OCI-LY7 (cell line): ENCODE measurements at regions of chr17 and their contacts with region 1.

Region 1: GRCh38 chr17:36601303-36602029 is at the start of gene MRM1:
- DNase-seq: peak; percentile 95
- H3K4me3 ChIP-seq: peak within 1 kb of the TSS; percentile 90
- H3K27ac ChIP-seq: peak within 1 kb of the TSS; percentile 67
- H3K4me1 ChIP-seq: peaks cover 31% of the 10 kb centered on the region
- CTCF ChIP-seq: peak; percentile 60
- total RNA-seq, gene MRM1: 20.9 and 22.5 TPM in 2 replicates

Region 2: GRCh38 chr17:36463916-36464315 is 137.6 kb before region 1 on chr17:
- CTCF ChIA-PET with region 1: no interaction called
- POLR2A ChIA-PET with region 1: no interaction called
- intact Hi-C with region 1: no loop called
- DNase-seq: no peak
- H3K4me3 ChIP-seq: no peak overlapping the region
- H3K27ac ChIP-seq: no peak overlapping the region
- H3K4me1 ChIP-seq: no peaks in the 10 kb centered on the region
- CTCF ChIP-seq: no peak

Region 3: DNA sequence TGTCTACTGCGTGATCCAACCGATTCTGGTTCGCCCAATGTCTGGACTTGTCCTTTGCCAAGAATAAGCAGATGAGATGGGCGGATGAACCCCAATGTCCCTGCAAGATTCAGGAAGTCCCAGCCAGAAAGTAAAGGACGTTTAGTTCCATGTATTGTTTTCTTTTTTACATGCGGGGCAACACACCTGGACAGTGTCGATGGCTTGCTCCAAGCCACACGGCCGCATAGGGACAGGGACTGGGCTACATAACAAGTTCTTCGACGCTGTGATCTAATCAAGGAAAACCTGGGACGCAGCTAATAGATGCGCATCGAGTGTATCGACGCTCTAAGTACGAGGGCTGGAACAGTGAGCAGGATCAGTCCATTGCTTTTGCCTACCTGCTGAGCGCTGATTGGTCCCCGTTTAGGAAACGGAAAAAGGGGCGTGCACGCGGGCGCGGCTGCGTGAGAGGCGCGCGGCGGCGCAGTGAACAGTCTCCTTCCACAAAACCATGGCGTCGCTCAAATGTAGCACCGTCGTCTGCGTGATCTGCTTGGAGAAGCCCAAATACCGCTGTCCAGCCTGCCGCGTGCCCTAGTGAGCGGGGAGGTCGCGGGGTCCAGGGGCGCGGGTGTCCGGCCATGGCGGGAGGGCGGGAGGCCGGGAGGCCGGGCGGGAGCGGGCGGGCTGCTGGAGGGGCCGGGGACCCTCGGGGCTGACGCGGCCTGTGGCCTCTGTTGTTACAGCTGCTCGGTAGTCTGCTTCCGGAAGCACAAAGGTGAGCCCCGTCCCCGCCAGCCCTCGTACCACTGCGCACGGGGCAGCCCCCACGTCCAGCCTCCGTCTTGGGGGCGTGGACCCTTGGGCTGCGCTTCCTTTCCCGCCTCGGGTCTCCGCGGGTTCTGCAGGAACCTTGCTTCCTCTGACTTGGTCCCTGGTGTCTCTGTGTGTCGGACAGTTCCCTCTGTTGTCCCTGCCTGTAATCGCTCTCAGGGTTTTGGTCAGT is 115.0 kb before region 1 on chr17 and contains the start of gene ZNHIT3:
- CTCF ChIA-PET with region 1: no interaction called
- POLR2A ChIA-PET with region 1: interaction called, 3 read pairs
- intact Hi-C with region 1: loop called (anchors 1 kb)
- DNase-seq: peak; percentile 94
- H3K4me3 ChIP-seq: peak within 1 kb of the TSS; percentile 94
- H3K27ac ChIP-seq: peak within 1 kb of the TSS; percentile 71
- H3K4me1 ChIP-seq: peaks cover 17% of the 10 kb centered on the region
- CTCF ChIP-seq: no peak
- total RNA-seq, gene ZNHIT3: 40.4 and 42.2 TPM in 2 replicates

Region 4: DNA sequence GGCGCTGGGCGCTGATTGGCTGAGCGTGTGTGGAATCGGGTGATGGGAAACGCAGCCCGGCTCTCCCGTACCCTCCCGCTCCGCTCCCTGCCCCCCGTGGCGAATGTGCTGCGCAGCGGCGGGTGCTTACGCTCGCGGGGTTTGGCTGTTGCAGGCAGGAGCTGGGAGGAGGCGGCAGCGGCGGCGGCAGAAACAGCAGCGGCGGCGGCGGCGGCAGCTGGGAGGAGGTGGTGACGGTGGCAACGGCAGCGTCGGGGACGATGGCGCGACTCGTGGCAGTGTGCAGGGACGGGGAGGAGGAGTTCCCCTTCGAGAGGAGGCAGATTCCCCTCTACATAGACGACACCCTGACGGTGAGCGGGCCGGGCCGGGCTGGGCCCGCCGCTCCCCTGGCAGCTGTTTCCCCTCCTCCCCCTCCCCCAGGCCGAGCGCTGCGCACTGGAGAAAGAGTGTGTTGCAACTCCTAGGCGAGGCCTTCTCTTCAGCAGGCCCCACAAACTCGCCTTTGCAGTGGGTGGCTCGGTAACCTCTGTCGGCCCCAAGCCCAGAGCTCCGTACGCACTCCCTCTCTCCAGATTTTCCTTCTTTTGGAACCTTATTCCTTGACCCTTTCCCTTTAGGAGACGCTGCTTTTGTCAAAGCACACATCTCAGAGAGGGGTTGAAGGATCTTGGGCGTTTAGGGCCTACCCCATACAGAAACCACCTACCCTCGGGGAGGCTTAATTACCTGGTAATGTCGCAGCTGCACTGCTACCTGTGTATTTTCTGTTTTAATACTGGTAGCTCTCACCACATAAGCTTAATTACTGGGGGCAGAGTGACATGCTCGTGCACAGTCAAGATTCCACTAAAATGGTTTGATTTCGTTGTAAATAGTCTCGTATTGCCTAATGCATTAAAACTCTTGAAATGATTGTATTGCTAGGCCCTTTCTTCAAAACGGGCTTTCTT is 55.7 kb before region 1 on chr17:
- CTCF ChIA-PET with region 1: no interaction called
- POLR2A ChIA-PET with region 1: interaction called, 4 read pairs
- intact Hi-C with region 1: loop called (anchors 2 kb)
- DNase-seq: peak; percentile 96
- H3K4me3 ChIP-seq: peak overlapping the region; percentile 97
- H3K27ac ChIP-seq: peak overlapping the region; percentile 95
- H3K4me1 ChIP-seq: peaks cover 41% of the 10 kb centered on the region
- CTCF ChIP-seq: no peak

Region 5: DNA sequence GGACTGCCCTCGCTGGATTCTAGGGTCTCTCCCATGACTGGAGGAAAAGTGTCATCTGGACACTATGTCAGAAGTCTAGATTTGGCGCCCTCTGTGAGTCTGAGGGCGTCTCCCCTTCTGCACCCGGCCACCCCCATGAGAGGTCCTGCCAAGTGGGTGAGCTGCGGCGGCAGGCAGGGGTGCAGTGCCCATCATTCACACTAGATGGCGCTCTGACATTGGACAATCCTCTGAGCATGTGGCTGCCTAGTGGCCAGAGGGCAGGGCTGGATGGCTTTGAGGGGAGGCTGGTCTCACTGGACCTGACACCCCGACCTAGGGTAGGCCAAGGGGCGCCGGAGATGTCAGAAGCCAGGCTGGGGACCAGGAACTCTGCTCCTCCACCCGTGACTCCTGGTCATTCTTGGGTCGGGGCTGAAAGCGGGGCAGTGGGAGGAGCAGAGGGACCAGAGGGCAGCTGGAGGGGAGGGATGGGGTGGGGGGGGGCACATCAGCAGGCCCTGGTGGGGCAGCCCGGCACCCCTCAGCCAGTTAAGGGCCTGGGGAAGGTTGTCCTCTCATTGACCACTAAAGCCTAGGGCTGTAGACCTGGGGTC is 27.9 kb after region 1 on chr17:
- CTCF ChIA-PET with region 1: no interaction called
- POLR2A ChIA-PET with region 1: no interaction called
- intact Hi-C with region 1: loop called (anchors 1 kb)
- DNase-seq: peak; percentile 73
- H3K4me3 ChIP-seq: no peak overlapping the region
- H3K27ac ChIP-seq: no peak overlapping the region
- H3K4me1 ChIP-seq: no peaks in the 10 kb centered on the region
- CTCF ChIP-seq: peak; percentile 96

Region 6: DNA sequence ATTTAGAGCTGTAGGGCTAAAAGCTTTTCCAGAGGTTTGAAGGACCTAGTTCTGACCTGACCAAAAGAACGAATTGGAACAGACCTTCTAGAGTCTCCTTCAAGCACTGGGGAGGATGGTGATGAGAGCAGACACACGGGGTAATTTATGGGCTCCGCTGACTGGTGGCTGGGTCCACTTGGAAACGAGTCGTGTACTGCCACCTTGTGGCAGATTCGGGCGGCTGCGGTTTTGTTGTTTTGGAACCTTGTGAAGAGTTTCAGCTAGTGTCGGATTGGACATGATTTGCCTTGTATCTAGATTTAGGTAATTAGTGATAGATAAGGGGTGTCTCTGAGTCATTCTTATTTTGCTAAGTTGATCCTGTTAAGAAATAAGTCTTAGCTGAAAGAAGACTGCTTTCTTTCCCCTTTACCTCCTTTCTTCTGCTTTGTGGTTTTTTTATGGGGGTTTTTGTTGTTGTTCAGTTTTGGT is 446.2 kb after region 1 on chr17:
- CTCF ChIA-PET with region 1: no interaction called
- POLR2A ChIA-PET with region 1: interaction called, 7 read pairs
- intact Hi-C with region 1: loop called (anchors 1 kb)
- DNase-seq: peak; percentile 79
- H3K4me3 ChIP-seq: no peak overlapping the region
- H3K27ac ChIP-seq: no peak overlapping the region
- H3K4me1 ChIP-seq: peaks cover 10% of the 10 kb centered on the region
- CTCF ChIP-seq: peak; percentile 97

Region 7: GRCh38 chr17:37373530-37374159 is 772.2 kb after region 1 on chr17:
- CTCF ChIA-PET with region 1: no interaction called
- POLR2A ChIA-PET with region 1: no interaction called
- intact Hi-C with region 1: loop called (anchors 10 kb)
- DNase-seq: peak; percentile 80
- H3K4me3 ChIP-seq: no peak overlapping the region
- H3K27ac ChIP-seq: no peak overlapping the region
- H3K4me1 ChIP-seq: no peaks in the 10 kb centered on the region
- CTCF ChIP-seq: peak; percentile 99

Region 8: DNA sequence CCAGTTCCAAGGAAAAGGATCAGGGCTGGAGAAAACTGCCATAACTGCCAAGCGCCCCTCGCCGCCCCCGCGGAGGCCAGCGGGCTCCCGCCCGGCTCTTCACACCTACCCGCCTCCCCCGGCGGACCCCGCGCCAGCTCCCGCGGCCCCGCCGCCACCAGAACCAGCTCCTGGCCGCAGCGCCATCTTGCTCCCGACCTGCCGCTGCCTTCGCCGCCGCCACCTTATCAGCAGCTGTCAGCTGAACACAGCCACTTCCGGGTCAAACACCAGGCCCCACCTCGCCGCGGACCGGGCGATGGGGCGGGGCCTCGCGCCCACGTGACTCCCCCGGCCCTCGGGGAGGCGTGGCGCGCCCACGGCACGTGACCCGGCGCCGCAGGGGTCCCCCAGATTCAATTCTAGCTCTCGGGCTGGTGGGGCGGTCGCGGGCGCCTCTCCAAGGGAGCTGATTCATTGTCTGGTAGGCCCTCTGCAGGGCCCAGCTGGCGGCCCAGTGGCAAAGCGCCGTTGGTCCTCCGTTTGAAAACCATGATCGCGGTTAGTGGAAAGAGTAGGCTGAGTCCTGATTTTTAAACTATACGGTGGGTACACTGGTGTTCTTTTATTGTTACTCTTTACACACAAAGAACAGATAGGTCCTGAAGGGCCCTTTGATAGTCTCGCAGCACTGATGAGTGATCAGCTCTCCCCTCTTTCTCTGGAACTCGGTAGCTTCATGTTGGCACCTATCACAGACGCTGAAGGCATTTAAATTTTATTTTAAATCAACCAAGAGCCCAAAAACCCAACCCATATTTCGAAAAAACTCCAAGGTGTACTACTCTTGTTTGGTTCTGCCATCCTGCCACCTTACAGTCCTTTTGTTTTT is 1007.9 kb after region 1 on chr17 and contains the start of gene SYNRG:
- CTCF ChIA-PET with region 1: no interaction called
- POLR2A ChIA-PET with region 1: no interaction called
- intact Hi-C with region 1: loop called (anchors 10 kb)
- DNase-seq: peak; percentile 97
- H3K4me3 ChIP-seq: peak within 1 kb of the TSS; percentile 99
- H3K27ac ChIP-seq: peak within 1 kb of the TSS; percentile 97
- H3K4me1 ChIP-seq: peaks cover 40% of the 10 kb centered on the region
- CTCF ChIP-seq: peak; percentile 73
- total RNA-seq, gene SYNRG: 39.6 and 46.5 TPM in 2 replicates